ENCODE measurements at regions of chr1 and their contacts with region 1.

Region 1: GRCh38 chr1:207499573-207499972 is 3.6 kb downstream of the CR1 start:
- DNase-seq: peak; percentile 78
- H3K4me3 ChIP-seq: no peak overlapping the region
- H3K27ac ChIP-seq: no peak overlapping the region
- H3K4me1 ChIP-seq: no peaks in the 10 kb centered on the region
- H3K27me3 ChIP-seq: peaks cover 93% of the 10 kb centered on the region
- CTCF ChIP-seq: peak; percentile 87

Region 2: DNA sequence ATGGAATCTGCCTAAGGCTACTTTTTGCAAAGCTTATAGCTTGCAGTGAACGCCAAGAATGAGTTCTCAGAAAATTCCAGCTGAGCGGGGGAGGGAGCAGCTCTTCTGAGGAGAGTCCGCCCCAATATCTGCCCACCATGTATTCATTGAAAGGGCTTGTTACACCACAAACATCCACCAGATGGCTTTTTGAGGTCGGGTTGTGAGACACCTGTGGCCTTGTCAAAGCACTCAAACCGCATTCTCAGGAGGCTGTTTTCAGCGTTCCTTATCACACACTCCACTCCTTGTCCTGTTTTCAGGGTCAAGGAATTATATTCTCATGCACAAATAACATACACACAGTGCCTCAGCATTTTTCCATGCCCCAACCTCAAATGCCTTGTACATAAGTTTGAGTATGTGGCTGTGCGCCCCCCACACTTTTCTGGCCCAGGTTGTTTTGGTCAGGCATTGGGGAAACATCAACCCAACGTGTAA is 414.8 kb before region 1 on chr1:
- CTCF ChIA-PET with region 1: interaction called, 4 read pairs
- POLR2A ChIA-PET with region 1: no interaction called
- intact Hi-C with region 1: loop called (anchors 1 kb)
- DNase-seq: peak; percentile 72
- H3K4me3 ChIP-seq: no peak overlapping the region
- H3K27ac ChIP-seq: no peak overlapping the region
- H3K4me1 ChIP-seq: no peaks in the 10 kb centered on the region
- H3K27me3 ChIP-seq: peaks cover 33% of the 10 kb centered on the region
- CTCF ChIP-seq: peak; percentile 63

Region 3: DNA sequence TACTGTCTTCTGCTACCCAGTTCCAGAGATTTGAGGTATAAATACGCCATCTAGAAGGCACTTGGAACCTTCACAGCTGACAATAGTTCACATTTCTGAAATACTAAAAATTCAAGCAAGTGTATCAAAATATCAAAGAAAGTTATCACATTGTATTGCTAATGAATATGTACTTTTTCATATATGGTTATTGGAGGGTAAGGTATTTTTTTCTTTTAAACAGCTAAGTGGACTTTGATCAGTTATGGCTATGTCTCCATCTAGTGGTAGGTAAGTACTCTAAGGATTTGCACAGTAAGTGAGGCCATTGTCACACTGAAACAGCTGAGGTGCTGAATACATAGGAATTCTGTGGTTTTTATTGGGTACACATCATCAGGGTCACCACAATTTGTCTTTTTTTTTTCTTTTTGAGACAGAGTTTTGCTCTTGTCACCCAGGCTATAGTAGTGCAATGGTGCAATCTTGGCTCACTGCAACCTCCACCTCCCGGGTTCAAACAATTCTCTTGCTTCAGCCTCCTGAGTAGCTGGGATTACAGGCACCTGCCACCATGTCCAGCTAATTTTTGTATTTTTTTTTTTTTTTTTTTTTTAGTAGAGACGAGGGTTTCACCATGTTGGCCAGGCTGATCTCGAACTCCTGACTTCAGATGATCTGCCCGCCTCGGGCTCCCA is 94.6 kb before region 1 on chr1:
- CTCF ChIA-PET with region 1: no interaction called
- POLR2A ChIA-PET with region 1: no interaction called
- intact Hi-C with region 1: loop called (anchors 5 kb)
- DNase-seq: peak; percentile 58
- H3K4me3 ChIP-seq: no peak overlapping the region
- H3K27ac ChIP-seq: no peak overlapping the region
- H3K4me1 ChIP-seq: no peaks in the 10 kb centered on the region
- H3K27me3 ChIP-seq: peaks cover 8% of the 10 kb centered on the region
- CTCF ChIP-seq: peak; percentile 80

Region 4: GRCh38 chr1:209041940-209042339 is 1542.4 kb after region 1 on chr1:
- CTCF ChIA-PET with region 1: no interaction called
- POLR2A ChIA-PET with region 1: no interaction called
- intact Hi-C with region 1: no loop called
- DNase-seq: no peak
- H3K4me3 ChIP-seq: no peak overlapping the region
- H3K27ac ChIP-seq: no peak overlapping the region
- H3K4me1 ChIP-seq: no peaks in the 10 kb centered on the region
- H3K27me3 ChIP-seq: no peaks in the 10 kb centered on the region
- CTCF ChIP-seq: no peak